Adrenal gland (tissue), 19 donors: ENCODE measurements at regions of chr1 and their contacts with region 1.

Region 1: GRCh38 chr1:76615253-76616035 is 251.8 kb upstream of the ST6GALNAC5 start:
- DNase-seq: no peak
- H3K4me3 ChIP-seq: no peak overlapping the region
- H3K27ac ChIP-seq: no peak overlapping the region
- H3K4me1 ChIP-seq: no peaks in the 10 kb centered on the region
- H3K27me3 ChIP-seq: no peaks in the 10 kb centered on the region
- CTCF ChIP-seq: no peak
- POLR2A ChIP-seq: no peak

Region 2: DNA sequence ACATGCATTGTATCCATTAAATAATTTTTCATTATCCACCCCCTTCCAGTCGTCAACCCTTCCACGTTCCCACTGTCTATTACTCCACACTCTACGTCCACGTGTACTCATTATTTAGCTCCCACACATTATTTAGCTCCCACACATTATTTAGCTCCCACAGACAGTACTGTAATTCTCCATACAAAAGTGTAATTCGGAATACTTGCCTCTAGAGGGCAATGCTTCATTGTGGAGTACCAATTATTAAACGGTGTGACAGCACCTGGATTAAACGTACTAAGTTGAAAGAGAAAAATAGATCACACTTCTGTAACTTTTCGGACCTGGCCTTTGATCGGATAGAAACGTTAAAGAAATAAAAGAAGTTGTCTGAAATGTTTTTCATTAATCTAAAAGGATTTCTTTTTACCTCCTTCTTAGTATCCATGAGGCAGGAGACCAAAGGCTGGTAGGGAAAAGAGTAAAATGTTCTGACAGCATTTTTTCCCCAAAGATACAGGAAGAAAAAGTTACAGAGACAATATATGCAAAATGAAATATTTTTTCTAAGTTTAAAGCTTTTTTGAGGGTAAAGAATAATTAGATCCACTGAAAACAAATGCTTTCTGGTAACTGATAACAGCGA is 1382.0 kb before region 1 on chr1:
- intact Hi-C with region 1: loop called in 1 of 2 experiments (anchors 10 kb)
- DNase-seq: no peak
- H3K4me3 ChIP-seq: no peak overlapping the region
- H3K27ac ChIP-seq: no peak overlapping the region
- H3K4me1 ChIP-seq: no peaks in the 10 kb centered on the region
- H3K27me3 ChIP-seq: no peaks in the 10 kb centered on the region
- CTCF ChIP-seq: peak; percentile 40 to 59 (median 52)
- POLR2A ChIP-seq: no peak

Region 3: DNA sequence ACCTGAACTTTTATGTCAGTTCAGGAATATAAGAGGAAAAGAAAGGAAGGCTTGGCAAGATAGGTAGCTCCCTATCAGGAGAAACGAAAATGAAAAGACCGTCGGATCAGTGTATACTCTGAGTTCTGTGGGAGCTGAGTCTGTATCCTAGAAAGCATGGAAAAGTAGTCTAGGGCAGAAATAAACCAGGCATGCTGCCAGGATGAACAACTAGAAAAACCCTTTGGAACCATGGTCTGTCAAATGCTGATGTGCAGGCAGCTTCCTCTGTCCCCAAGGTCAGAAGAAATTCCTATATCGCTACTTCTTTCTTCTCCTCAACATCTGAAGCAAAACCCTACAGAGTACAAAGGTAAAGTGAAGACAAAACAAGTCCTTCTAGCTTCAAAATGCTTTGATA is 272.1 kb before region 1 on chr1:
- intact Hi-C with region 1: no loop called
- DNase-seq: peak in 2 of 7 donors; percentile 6 to 13
- H3K4me3 ChIP-seq: no peak overlapping the region
- H3K27ac ChIP-seq: no peak overlapping the region
- H3K4me1 ChIP-seq: no peaks in the 10 kb centered on the region
- H3K27me3 ChIP-seq: no peaks in the 10 kb centered on the region
- CTCF ChIP-seq: no peak
- POLR2A ChIP-seq: no peak